Cardiac septum (tissue), 1 donor: ENCODE measurements at regions of chr11 and their contacts with region 1.

Region 1: GRCh38 chr11:45754261-45754709 is 50.7 kb upstream of the SLC35C1 start:
- DNase-seq: peak; percentile 81

Region 2: DNA sequence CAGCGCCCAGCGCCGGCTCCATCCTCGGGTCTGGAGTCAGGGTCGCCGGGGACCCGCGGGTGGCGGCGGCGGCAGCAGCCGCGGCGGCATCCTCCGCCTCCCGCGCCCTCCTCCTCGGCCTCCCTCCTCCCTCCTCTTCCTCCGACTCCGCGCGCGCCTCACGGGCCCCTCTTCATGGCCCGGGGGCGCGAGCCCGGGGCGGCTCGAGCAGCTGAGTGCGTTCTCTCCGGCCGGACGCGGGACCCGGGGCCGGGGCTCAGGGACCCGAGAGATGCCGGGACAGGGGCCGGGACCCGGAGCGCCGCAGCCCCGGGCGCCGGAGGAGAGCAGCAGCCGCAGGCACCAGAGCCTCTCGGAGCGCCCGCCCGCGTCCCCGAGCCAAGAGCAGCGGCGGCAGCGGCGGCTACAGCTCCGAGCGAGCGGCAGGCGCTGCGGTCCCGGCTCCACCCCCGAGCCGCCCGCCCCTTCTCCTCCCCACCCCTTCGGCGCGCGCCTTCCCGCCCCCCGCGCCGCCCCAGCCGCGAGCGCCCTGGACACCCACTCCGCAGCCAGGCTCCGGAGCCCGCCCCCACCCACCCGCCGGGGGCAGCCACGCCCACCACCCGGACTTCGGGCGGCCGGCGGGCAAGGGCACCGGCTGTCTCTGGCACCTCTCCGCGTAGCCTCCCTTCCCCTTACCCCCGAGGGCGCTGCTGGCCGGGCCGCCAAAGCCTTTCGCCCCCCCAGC is 88.9 kb before region 1 on chr11 and contains the start of gene CHST1:
- intact Hi-C with region 1: loop called (anchors 10 kb)
- DNase-seq: peak; percentile 76
- total RNA-seq, gene CHST1: 2.6 TPM

Region 3: DNA sequence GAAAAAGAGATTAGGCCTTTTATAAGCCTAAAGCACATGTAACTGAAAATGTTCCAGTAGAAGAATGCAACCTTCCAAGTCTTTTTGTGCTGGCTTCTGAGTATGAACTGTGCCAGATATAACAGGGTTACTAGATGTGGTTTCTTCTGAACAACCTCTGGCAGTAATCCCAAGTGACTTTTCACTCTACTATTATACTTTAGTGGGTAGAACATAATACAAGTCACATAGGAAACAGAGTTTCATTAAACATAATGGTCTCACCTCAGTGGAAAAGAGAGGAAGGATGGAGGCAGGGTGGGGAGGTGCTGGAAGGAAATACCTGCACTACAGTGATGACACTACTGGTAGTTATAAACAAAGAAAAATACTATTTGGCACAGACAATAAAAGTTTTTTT is 285.7 kb after region 1 on chr11:
- intact Hi-C with region 1: no loop called
- DNase-seq: no peak